ENCODE measurements at regions of chr11 and their contacts with region 1.

Region 1: GRCh38 chr11:86456052-86456939 is 81.6 kb downstream of the CCDC81 start:
- H3K4me3 ChIP-seq: no peak overlapping the region
- H3K27ac ChIP-seq: no peak overlapping the region
- H3K4me1 ChIP-seq: peaks cover 4% of the 10 kb centered on the region; the same call in 1 of the 2 replicates
- CTCF ChIP-seq: peak; percentile 67; the same call in 1 of the 2 replicates

Region 2: GRCh38 chr11:86483940-86484794 is 27.9 kb after region 1 on chr11:
- CTCF ChIA-PET with region 1: interaction called, 15 read pairs
- POLR2A ChIA-PET with region 1: interaction called, 8 read pairs
- H3K4me3 ChIP-seq: no peak overlapping the region
- H3K27ac ChIP-seq: peak overlapping the region; percentile 61
- H3K4me1 ChIP-seq: peaks cover 3% of the 10 kb centered on the region; the same call in 1 of the 2 replicates
- CTCF ChIP-seq: no peak

Region 3: GRCh38 chr11:86519064-86519911 is 63.0 kb after region 1 on chr11:
- CTCF ChIA-PET with region 1: interaction called, 12 read pairs
- POLR2A ChIA-PET with region 1: interaction called, 8 read pairs
- H3K4me3 ChIP-seq: no peak overlapping the region
- H3K27ac ChIP-seq: peak overlapping the region; percentile 93
- H3K4me1 ChIP-seq: peaks cover 32% of the 10 kb centered on the region
- CTCF ChIP-seq: no peak

Region 4: DNA sequence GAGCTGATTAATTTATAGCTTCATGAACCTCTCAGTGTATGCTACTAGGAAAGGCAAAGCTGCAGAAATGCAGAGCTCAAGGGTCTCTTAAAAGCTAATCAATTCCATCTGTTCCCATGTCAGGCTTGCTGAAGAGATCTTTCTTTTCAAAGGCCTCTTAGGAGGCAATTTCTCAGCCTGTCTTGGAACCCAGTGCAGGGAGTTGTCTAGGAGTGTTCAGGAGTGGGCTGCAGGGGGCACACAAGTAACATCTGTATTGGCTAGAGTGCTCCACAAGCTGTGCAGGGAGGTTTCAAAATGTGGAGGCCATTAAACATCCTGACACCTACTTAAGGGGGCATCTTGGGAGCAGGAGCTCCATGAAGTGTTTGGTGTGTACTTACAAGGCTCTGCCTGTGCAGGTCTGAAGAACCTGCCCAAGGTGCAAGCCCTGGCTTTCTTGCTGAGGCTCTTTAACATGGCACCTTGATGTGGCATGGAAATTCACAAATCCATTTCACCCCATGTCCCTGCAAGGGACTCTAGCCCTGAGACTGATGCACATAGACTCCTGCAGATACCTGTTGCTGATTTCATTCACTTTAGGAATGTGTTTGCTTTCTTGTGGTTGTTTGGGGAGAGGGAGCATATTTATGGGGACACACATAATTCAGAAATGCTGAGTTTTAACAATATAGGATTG is 81.4 kb after region 1 on chr11:
- CTCF ChIA-PET with region 1: interaction called, 11 read pairs
- POLR2A ChIA-PET with region 1: no interaction called
- H3K4me3 ChIP-seq: no peak overlapping the region
- H3K27ac ChIP-seq: no peak overlapping the region
- H3K4me1 ChIP-seq: no peaks in the 10 kb centered on the region
- CTCF ChIP-seq: peak; percentile 29; the same call in 1 of the 2 replicates

Region 5: GRCh38 chr11:86570020-86570419 is 113.7 kb after region 1 on chr11:
- CTCF ChIA-PET with region 1: interaction called, 20 read pairs
- POLR2A ChIA-PET with region 1: interaction called, 4 read pairs
- H3K4me3 ChIP-seq: no peak overlapping the region
- H3K27ac ChIP-seq: peak overlapping the region; percentile 49; the same call in 1 of the 2 replicates
- H3K4me1 ChIP-seq: peaks cover 17% of the 10 kb centered on the region
- CTCF ChIP-seq: no peak

Region 6: GRCh38 chr11:86811637-86812321 is 355.5 kb after region 1 on chr11:
- CTCF ChIA-PET with region 1: interaction called, 24 read pairs
- POLR2A ChIA-PET with region 1: no interaction called
- H3K4me3 ChIP-seq: no peak overlapping the region
- H3K27ac ChIP-seq: no peak overlapping the region
- H3K4me1 ChIP-seq: peaks cover 3% of the 10 kb centered on the region; the same call in 1 of the 2 replicates
- CTCF ChIP-seq: no peak

Measured in HEK293 (cell line).